ENCODE measurements at regions of chr11 and their contacts with region 1.

Region 1: DNA sequence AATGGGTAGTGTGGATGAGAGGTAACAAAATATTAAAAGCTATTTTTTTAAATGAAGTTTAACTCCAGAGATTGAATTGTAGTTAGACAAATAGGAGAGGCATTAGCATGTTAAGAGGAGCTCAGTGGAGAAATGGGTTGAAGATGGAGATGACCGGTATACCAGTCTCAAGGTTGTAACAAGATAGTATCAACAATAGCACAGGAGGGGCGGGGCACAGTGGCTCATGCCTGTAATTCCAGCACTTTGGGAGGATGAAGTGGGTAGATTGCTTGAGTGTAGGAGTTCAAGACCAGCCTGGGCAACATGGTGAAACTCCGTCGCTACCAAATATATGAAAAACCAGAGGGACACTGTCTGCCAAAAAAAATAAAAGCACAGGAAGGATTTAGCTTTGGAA is 6.0 kb upstream of the ANKRD42 start:
- DNase-seq: no peak
- H3K4me3 Mint-ChIP-seq: no peak overlapping the region
- H3K27ac Mint-ChIP-seq: no peak overlapping the region
- H3K4me1 Mint-ChIP-seq: peaks cover 9% of the 10 kb centered on the region
- H3K27me3 Mint-ChIP-seq: no peaks in the 10 kb centered on the region
- CTCF ChIP-seq: no peak

Region 2: DNA sequence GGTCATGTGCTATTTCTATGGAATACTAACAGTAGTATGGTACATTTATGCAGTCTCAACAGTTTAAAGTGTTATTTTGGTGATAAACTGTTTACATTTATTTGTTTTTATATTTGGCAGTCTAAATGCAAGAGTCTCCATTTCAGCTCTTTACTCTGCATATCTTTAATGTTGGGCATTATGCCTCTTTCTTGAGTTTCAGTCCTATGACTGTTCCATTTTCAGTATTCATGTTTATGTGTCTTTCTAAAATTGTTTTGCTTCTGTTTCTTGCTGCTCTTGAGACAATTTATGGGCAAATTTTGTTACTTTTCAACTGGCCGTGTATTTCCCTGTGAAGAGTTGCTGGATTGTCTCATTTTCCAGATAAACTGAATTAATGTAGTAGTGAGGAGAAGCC is 109.2 kb before region 1 on chr11:
- CTCF ChIA-PET with region 1: no interaction called
- POLR2A ChIA-PET with region 1: no interaction called
- intact Hi-C with region 1: no loop called
- DNase-seq: no peak
- H3K4me3 Mint-ChIP-seq: no peak overlapping the region
- H3K27ac Mint-ChIP-seq: peak overlapping the region; percentile 14
- H3K4me1 Mint-ChIP-seq: peaks cover 13% of the 10 kb centered on the region
- H3K27me3 Mint-ChIP-seq: no peaks in the 10 kb centered on the region
- CTCF ChIP-seq: no peak

Region 3: GRCh38 chr11:83172551-83172950 is 14.9 kb before region 1 on chr11:
- CTCF ChIA-PET with region 1: interaction called, 4 read pairs
- POLR2A ChIA-PET with region 1: interaction called, 12 read pairs
- intact Hi-C with region 1: no loop called
- DNase-seq: no peak
- H3K4me3 Mint-ChIP-seq: no peak overlapping the region
- H3K27ac Mint-ChIP-seq: no peak overlapping the region
- H3K4me1 Mint-ChIP-seq: peaks cover 31% of the 10 kb centered on the region
- H3K27me3 Mint-ChIP-seq: no peaks in the 10 kb centered on the region
- CTCF ChIP-seq: no peak

Region 4: GRCh38 chr11:83257761-83258168 is 70.3 kb after region 1 on chr11:
- CTCF ChIA-PET with region 1: no interaction called
- POLR2A ChIA-PET with region 1: no interaction called
- intact Hi-C with region 1: no loop called
- DNase-seq: peak; percentile 64
- H3K4me3 Mint-ChIP-seq: no peak overlapping the region
- H3K27ac Mint-ChIP-seq: peak overlapping the region; percentile 50
- H3K4me1 Mint-ChIP-seq: no peaks in the 10 kb centered on the region
- H3K27me3 Mint-ChIP-seq: no peaks in the 10 kb centered on the region
- CTCF ChIP-seq: no peak

Region 5: GRCh38 chr11:83349296-83349695 is 161.8 kb after region 1 on chr11:
- CTCF ChIA-PET with region 1: no interaction called
- POLR2A ChIA-PET with region 1: no interaction called
- intact Hi-C with region 1: no loop called
- DNase-seq: no peak
- H3K4me3 Mint-ChIP-seq: no peak overlapping the region
- H3K27ac Mint-ChIP-seq: no peak overlapping the region
- H3K4me1 Mint-ChIP-seq: no peaks in the 10 kb centered on the region
- H3K27me3 Mint-ChIP-seq: peaks cover 13% of the 10 kb centered on the region
- CTCF ChIP-seq: no peak

Measured in MCF 10A (cell line).